Activated B cell treated with CpG ODN at 0.5 μM for 24 hours (primary cell): ENCODE measurements at regions of chr2 and their contacts with region 1.

Region 1: DNA sequence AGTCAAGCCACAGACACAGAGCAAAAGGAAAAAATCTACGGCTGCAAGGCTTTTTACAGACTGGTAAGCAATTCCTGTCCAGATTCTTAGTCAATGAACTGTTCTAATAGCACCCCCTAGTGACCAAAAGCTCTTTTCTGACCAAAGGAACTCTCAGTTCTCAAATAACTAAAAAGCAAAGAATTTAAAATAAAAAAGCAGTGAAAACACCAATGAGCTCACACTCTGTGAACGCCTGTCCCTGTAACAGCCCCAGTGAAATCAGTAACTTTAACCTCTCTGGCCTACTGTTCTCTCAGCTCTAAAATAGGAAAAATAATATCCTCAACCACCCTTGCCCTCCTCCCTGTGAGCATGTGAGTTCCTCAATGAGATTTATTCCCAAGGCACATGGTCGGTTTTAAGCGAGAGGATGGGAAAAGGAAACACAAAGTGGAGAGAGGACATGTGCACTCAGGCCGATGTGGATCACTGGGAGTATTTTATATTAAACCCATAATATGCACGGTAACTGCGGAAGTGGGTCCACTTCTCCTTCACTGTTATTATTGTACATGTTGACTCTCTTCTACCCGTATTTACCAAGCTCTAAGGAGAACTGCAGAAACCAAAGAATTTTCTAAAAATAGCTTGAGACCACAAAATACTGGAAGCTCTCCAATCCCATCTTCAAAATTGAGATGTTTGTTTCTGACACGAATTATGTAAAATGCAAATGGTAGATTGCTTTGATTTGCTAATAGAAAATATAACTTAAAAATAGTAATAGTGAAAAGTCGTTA is 128.5 kb downstream of the STK39 start:
- DNase-seq: no peak
- ATAC-seq: peak; percentile 71
- H3K4me3 Mint-ChIP-seq: no peak overlapping the region
- H3K27ac Mint-ChIP-seq: no peak overlapping the region
- H3K4me1 Mint-ChIP-seq: no peaks in the 10 kb centered on the region
- H3K27me3 Mint-ChIP-seq: no peaks in the 10 kb centered on the region
- CTCF ChIP-seq: peak; percentile 52

Region 2: GRCh38 chr2:167212014-167212648 is 906.8 kb before region 1 on chr2:
- CTCF ChIA-PET with region 1: interaction called, 3 read pairs
- POLR2A ChIA-PET with region 1: no interaction called
- intact Hi-C with region 1: loop called (anchors 5 kb)
- DNase-seq: no peak
- ATAC-seq: no peak
- H3K4me3 Mint-ChIP-seq: no peak overlapping the region
- H3K27ac Mint-ChIP-seq: no peak overlapping the region
- H3K4me1 Mint-ChIP-seq: no peaks in the 10 kb centered on the region
- H3K27me3 Mint-ChIP-seq: no peaks in the 10 kb centered on the region
- CTCF ChIP-seq: peak; percentile 12

Region 3: GRCh38 chr2:167689444-167689843 is 429.5 kb before region 1 on chr2:
- CTCF ChIA-PET with region 1: interaction called, 3 read pairs
- POLR2A ChIA-PET with region 1: no interaction called
- intact Hi-C with region 1: loop called (anchors 10 kb)
- DNase-seq: no peak
- ATAC-seq: no peak
- H3K4me3 Mint-ChIP-seq: no peak overlapping the region
- H3K27ac Mint-ChIP-seq: no peak overlapping the region
- H3K4me1 Mint-ChIP-seq: no peaks in the 10 kb centered on the region
- H3K27me3 Mint-ChIP-seq: no peaks in the 10 kb centered on the region
- CTCF ChIP-seq: no peak

Region 4: DNA sequence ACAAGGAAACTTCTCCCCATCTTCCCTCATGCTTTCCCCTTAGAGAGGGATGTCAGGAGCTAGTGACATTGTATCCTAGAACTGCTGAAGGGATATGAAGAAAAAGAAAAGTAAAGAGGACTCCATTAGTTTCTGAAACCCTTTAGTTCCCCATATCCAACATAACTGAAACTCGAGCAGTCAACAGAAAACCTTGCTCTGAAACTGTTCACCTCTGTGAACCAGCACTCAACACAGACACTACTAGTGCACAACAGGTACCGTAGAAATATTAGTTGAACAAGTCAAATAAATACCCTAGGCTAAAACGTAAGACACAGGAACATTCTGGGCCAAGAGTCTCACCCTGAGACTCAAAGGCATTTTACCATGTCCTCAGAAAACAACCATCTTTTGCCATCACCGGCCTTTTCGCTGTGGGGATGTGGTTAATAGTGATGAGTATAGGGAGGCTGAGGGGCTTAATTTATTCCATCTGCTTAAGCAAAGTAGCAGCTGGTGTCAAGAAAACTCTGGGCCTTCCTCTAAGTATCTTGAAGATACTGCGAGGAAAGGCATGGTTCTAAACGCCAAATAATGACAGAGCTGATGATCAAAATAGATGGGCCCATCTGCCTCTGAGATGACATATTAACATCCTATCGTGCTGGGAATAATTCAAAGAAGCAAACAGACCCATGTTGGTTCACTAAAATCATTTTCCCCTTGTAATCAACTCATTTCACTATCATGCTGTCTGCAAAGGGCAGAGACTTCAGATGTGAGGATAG is 28.4 kb before region 1 on chr2:
- CTCF ChIA-PET with region 1: interaction called, 10 read pairs
- POLR2A ChIA-PET with region 1: no interaction called
- intact Hi-C with region 1: no loop called
- DNase-seq: no peak
- ATAC-seq: peak; percentile 80
- H3K4me3 Mint-ChIP-seq: peak overlapping the region; percentile 38
- H3K27ac Mint-ChIP-seq: peak overlapping the region; percentile 79
- H3K4me1 Mint-ChIP-seq: peaks cover 33% of the 10 kb centered on the region
- H3K27me3 Mint-ChIP-seq: no peaks in the 10 kb centered on the region
- CTCF ChIP-seq: no peak

Region 5: DNA sequence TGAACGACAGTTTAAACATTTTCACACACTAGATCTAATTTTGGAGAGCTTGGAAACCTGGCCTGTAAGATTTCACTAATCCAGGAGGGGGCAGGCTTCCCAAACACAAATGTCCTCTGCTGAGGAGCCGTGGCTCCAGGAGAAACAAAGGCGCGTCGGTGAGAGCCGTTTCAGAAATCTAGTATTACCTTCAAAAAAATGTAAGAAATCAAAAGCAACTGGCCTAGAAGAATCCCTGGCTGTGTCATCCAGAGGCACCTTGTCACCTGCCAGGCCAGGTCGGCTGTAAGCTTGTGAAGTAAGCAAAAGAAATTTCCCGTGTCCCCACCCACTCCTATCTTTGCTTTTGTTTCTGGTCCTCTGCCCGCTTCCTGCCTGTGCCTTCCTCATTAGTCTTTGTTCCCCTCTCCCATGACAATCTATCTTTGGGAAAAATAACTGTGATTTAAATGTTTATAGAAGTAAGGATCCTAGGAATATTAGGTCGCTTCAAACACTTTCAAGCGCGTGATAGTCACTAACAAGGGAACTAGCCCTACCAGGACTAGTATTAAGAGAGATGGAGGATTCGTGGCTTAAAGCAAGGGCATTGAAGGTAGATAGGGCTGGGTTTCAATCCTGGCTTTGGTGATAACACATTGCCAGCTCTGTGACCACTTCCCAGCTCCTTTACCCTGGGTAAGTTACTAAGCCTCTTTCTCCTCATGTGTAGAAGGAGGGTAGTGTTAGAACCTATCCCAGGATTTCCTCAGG is 228.0 kb after region 1 on chr2:
- CTCF ChIA-PET with region 1: interaction called, 12 read pairs
- POLR2A ChIA-PET with region 1: no interaction called
- intact Hi-C with region 1: no loop called
- DNase-seq: peak; percentile 24
- ATAC-seq: peak; percentile 72
- H3K4me3 Mint-ChIP-seq: peak overlapping the region; percentile 78
- H3K27ac Mint-ChIP-seq: no peak overlapping the region
- H3K4me1 Mint-ChIP-seq: peaks cover 22% of the 10 kb centered on the region
- H3K27me3 Mint-ChIP-seq: peaks cover 5% of the 10 kb centered on the region
- CTCF ChIP-seq: peak; percentile 61